H1 (cell line): ENCODE measurements at regions of chr16 and their contacts with region 1.

Region 1: DNA sequence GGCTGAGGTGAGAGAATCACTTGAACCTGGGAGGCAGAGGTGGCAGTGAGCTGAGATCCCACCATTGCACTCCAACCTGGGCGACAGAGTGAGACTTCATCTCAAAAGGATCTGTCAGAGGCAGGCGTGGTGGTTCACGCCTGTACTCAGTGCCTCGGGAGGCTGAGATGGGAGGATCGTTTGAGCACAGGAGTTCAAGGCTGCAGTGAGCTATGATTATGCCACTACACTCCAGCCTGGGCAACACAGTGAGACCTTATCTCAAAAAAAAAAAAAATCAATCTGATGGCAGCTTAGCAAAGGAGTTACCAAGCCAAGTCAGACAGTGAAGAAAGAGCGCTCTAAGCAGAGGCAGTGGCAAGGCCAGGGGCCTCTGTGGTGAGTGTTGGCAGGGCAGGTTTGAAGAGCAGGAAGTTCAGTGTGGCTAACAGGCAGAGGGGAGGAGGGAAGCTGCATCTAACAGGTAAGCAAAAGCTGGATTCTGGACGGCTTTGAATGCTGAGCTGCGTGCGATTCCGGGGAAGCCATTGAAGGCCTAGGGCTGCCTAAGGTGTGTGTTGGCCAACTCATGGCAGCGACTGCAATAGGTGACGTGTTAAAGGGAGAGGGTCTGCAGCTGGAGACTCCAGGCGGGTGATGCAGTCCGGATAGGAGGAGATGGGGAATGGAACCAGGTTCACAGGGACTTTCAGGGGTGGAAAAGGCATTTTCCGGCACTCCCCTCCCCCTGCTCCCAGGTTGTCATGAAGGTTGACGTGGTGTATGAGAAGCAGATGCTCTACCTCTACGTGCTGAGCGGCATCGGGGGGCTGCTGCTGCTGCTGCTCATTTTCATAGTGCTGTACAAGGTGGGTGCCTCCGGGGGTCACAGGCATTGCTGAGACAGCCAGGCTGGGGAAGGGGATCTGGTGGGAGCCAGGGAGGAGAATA is 7.0 kb downstream of the ZNF768 start:
- DNase-seq: no peak
- H3K4me3 ChIP-seq: no peak overlapping the region
- H3K27ac ChIP-seq: no peak overlapping the region
- H3K4me1 ChIP-seq: no peaks in the 10 kb centered on the region
- H3K27me3 ChIP-seq: no peaks in the 10 kb centered on the region; a peak in 1 of 7 replicates
- CTCF ChIP-seq: no peak
- EP300 ChIP-seq: no peak
- POLR2A ChIP-seq: no peak
- RAD21 ChIP-seq: no peak

Region 2: GRCh38 chr16:30509081-30509765 is 10.2 kb before region 1 on chr16:
- CTCF ChIA-PET with region 1: interaction called, 13 read pairs
- POLR2A ChIA-PET with region 1: interaction called, 3 read pairs
- DNase-seq: no peak
- H3K4me3 ChIP-seq: no peak overlapping the region
- H3K27ac ChIP-seq: no peak overlapping the region
- H3K4me1 ChIP-seq: no peaks in the 10 kb centered on the region
- H3K27me3 ChIP-seq: peaks cover 0 to 2% (median 0%) of the 10 kb centered on the region in 4 experiments; a peak in 1 of 7 replicates
- CTCF ChIP-seq: no peak
- EP300 ChIP-seq: no peak
- POLR2A ChIP-seq: no peak
- RAD21 ChIP-seq: no peak

Region 3: DNA sequence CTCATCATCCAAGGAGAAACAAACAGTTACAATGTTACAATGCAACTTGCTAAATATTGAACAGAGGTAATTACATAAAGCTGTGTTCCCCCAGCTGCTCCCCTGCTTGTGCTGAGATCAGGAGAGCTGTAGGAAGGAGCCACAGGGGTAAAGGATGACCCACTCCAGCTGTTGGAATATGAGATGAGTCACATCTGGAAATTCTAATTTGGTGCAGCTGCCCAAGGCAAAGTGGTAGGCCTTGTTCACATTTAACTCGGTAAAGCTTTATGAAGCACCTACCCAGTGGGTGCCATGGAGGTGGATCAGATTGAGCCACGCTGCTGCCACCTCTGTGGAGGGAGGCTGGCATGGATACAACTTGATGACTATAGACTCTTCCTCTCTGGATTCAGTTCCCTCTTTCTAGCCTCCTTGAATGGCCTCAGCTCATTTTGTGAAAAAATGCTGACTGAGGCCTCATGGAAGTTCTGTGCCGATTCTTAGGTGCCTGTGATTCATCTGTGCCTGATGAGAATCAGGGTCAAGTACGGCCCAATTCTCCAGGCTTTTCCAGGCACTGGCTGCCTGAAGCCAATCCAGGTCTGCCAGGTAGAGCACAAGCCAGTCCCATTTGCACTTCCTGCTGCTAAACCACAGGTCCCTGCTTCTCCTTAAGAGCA is 83.4 kb after region 1 on chr16:
- CTCF ChIA-PET with region 1: interaction called, 16 read pairs
- POLR2A ChIA-PET with region 1: no interaction called
- DNase-seq: no peak
- H3K4me3 ChIP-seq: no peak overlapping the region
- H3K27ac ChIP-seq: no peak overlapping the region
- H3K4me1 ChIP-seq: no peaks in the 10 kb centered on the region
- H3K27me3 ChIP-seq: no peaks in the 10 kb centered on the region
- CTCF ChIP-seq: no peak
- EP300 ChIP-seq: no peak
- POLR2A ChIP-seq: no peak
- RAD21 ChIP-seq: no peak